Gastrocnemius medialis (tissue), 4 donors: ENCODE measurements at regions of chr12 and their contacts with region 1.

Region 1: GRCh38 chr12:108850854-108851573 is 6.4 kb downstream of the SSH1 start:
- DNase-seq: no peak
- ATAC-seq: no peak
- H3K4me3 ChIP-seq: no peak overlapping the region
- H3K27ac ChIP-seq: peak overlapping the region; percentile 90 to 98 (median 96)
- H3K4me1 ChIP-seq: peaks cover 81 to 86% of the 10 kb centered on the region in 2 donors
- H3K27me3 ChIP-seq: no peaks in the 10 kb centered on the region
- CTCF ChIP-seq: no peak
- POLR2A ChIP-seq: peak in 1 of 2 donors; percentile 19

Region 2: DNA sequence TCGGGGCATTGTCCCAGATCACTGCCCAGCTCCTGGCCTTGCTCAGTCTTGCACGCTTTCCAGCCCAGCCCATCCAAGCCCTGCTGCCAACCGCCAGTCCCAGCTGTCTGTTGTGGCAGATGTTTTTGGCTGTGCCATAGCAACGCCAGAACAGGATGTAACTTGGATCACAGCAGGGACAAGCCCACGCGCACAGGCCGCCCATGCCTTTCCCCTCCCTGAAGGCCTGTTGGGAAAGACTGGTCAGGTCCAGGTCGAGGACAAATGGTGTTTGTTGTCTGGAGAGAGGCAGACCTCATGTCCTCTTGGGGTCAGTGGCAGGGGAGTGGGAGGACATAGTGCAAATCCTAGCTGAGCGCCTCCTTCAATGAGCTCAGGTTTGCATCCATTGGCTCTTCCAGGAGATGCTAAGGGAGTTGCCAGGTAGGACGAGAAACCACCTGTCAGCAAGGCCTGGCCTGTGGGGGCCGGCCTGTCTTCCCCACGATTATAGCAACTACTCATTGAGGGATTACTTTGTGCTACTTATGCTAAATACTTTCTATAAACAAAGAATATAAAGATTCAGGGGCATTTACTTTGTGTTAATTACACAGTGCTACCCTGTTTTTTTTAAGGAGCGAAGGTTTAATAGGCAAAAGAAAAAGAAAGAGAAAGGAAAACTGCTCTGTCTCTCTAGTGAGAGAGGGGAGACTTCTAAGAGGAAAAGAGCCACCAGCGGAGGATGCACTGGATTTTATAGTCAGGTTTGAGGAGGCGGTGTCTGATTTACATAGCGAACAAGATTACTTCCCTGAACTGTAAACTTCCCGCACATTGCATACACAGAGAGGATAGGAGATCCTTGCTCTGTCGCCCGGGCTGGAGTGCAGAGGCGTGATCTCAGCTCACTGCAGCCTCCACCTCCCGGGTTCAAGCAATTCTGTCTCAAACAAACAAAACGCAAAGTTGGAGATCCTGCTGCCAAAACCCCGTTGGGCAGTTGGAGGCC is 76.9 kb before region 1 on chr12:
- in situ Hi-C with region 1: no loop called
- intact Hi-C with region 1: loop called (anchors 2 kb)
- DNase-seq: peak; percentile 88 to 94
- ATAC-seq: peak; percentile 86 to 90
- H3K4me3 ChIP-seq: no peak overlapping the region
- H3K27ac ChIP-seq: peak overlapping the region; percentile 80 to 86 (median 84)
- H3K4me1 ChIP-seq: peaks cover 36 to 45% of the 10 kb centered on the region in 2 donors
- H3K27me3 ChIP-seq: no peaks in the 10 kb centered on the region
- CTCF ChIP-seq: no peak
- POLR2A ChIP-seq: peak; percentile 8 to 27

Region 3: DNA sequence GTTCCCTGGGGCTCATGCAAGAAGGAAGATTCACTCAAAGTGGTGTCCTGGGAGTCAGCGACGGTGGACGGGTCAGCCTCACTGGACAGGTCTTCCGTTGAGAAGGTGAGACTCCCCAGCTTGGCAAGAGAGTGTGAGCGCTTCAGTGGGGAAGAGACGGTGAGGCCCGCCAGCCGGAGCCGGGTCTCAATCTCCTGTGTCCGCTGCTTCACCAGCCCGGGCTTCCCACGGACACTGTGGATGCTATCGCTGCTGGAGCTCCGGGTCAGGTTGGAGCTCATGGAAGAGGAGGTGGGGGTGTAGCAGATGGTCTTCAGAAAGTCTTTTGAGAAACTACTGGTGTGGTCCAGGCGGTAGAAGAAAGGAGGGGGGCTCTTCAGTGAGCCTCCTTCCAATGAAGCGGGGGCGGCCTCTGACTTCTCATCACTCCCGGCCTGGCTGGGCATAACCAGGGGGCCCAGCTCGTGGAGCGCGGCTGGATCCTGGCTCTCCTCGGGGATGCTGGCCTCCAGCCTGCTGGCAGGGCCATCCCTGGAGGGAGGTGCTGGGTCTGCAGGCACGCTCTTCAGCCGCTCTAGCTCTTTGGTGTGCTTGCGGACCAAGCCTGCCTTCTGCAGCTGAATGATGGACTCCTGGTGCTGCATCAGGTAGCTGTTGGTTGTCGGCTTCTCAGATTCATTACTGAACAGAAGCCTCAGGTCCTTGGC is 62.8 kb before region 1 on chr12:
- in situ Hi-C with region 1: no loop called
- intact Hi-C with region 1: loop called (anchors 5 kb)
- DNase-seq: no peak
- ATAC-seq: no peak
- H3K4me3 ChIP-seq: no peak overlapping the region
- H3K27ac ChIP-seq: peak overlapping the region; percentile 77 to 92 (median 84)
- H3K4me1 ChIP-seq: peaks cover 54 to 61% of the 10 kb centered on the region in 2 donors
- H3K27me3 ChIP-seq: no peaks in the 10 kb centered on the region
- CTCF ChIP-seq: no peak
- POLR2A ChIP-seq: no peak